Activated CD4-positive, alpha-beta T cell treated with anti-CD3 and anti-CD28 coated beads, Interleukin-2, amount 10 ng/mL, durations not matched to agents 24 days and 14 days (primary cell): ENCODE measurements at regions of chr13 and their contacts with region 1.

Region 1: DNA sequence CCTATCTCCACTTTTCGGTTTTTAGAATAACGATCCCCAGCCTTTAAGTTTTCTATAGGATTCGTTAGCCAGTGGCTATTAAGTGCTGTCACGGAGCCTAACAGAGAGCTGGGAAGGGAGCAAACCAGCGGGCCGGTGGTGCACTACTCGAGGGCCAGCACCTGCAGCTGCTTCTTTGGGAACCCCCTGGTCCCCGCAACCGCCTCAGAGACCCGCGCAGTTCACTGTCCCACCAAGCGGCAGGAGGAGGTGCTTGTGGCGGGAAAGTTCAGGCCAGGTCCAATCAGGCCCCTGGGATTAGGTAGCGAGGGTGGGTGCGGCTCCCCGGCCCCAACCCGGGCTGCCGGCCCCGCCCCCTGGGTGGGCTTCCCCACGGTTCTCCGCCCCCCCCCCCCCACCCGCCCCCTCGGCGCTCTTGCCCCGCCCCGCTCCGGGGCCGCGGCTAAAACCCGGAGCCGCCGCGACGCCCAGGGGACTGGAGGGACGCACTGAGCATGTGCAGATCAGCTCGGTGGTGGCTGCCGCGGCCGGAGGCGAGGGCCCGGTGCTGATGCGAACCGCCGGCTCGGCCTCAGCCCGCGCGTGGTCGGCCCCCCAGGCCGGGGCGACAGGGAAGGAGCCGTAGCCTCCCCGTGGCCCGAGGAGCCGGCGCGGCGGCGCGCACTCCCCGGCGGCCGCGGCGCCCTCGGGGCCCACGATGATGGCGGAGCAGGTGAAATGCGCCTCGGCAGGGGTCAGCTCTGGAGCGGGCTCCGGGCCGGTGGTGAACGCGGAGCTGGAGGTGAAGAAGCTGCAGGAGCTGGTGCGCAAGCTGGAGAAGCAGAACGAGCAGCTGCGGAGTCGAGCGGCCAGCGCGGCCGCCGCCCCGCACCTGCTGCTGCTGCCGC is at the start of gene SLAIN1:
- DNase-seq: peak; percentile 94
- H3K4me3 Mint-ChIP-seq: peak within 1 kb of the TSS; percentile 99
- H3K27ac Mint-ChIP-seq: peak within 1 kb of the TSS; percentile 68
- H3K4me1 Mint-ChIP-seq: peaks cover 31% of the 10 kb centered on the region
- H3K27me3 Mint-ChIP-seq: peaks cover 35% of the 10 kb centered on the region
- total RNA-seq, gene SLAIN1: 28.7 and 29.1 TPM in 2 replicates

Region 2: DNA sequence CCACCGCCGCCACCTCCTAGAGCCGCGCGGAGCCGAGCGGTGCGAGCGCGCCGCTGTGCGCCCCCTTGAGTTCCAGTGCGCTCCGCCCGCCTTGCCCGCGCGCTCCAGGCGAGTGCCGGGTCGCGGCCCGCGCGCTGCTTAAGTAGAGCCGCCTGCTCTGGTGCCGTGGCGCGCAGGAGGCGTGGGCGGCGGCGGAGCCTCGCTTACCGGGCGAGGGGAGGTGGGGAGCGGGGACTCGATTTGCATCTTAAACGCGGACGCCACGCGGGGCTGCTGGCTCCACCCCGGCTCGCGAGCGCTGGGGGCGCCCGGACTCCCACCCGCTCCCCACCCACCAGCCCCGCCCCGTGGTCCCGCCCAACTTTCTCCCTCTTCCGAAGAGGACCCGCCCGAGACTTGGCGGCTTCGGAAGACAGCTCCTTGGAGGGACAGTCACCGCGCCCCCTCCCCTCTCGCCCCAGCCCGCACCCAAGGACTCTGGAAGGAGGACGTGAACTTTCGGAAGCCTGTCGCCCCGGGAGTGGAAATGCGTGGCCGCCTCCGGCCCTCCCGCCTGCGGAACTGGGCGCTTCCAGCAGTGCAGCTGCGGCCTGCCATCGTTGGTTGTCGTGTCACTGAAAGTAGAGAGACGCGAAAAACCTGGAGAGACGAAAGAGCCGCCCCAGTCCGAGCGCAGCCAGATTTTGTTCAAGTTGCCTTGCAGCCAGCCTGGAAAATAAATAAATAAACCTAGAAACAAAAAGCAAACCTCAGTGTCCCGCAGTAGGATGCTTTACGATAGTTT is 811.0 kb before region 1 on chr13 and contains the start of gene KCTD12:
- intact Hi-C with region 1: loop called (anchors 5 kb)
- DNase-seq: peak; percentile 93
- H3K4me3 Mint-ChIP-seq: peak within 1 kb of the TSS; percentile 89
- H3K27ac Mint-ChIP-seq: peak within 1 kb of the TSS; percentile 87
- H3K4me1 Mint-ChIP-seq: peaks cover 26% of the 10 kb centered on the region
- H3K27me3 Mint-ChIP-seq: peaks cover 40% of the 10 kb centered on the region
- total RNA-seq, gene KCTD12: 11.8 and 12.9 TPM in 2 replicates

Region 3: GRCh38 chr13:77729502-77730221 is 32.2 kb after region 1 on chr13:
- intact Hi-C with region 1: loop called (anchors 1 kb)
- DNase-seq: peak; percentile 84
- H3K4me3 Mint-ChIP-seq: peak overlapping the region; percentile 61
- H3K27ac Mint-ChIP-seq: peak overlapping the region; percentile 78
- H3K4me1 Mint-ChIP-seq: peaks cover 24% of the 10 kb centered on the region
- H3K27me3 Mint-ChIP-seq: no peaks in the 10 kb centered on the region

Region 4: DNA sequence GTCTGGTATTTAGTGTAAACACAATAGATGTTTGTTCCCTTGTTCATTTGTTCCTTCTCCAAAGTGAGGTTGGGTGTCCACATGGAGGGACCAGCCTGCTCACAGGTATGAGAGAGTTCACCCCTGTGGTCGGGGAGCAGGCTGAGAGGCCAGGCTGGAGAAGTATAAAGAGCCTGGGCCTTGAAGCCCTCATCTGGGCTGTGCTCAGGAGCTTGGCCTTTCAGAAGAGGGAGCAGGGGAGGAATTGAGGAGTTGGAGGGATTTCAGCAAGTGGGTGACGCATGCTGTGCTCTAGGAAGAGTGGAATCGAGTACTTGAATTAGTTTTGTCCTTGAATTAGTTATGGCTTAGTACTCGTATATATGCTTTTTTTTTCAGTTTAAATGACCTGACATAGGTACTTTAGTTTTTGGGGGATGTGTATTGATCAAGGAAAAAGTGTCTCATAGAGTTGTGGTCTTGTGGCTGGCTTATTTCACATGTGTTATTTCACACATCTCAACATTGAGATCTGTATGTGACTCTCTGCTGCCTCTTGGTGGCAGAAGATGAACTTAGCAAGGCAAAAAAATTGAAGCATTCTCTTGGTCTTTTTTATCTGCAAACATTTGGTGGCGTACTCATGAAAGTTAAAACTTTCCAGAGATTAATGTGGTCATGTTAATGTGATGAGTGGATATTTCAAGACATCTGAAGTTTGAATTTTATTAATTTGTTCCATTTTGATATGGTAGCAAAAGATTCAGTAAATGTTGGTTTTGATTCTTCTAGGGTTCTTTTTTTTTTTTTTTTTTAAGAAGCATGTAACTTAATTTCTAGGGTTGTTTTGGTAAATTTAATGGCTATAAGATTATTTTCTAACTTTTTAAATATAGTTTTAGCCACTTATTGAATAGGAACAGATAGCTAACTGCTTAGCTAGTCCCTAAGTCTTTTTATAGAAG is 54.3 kb after region 1 on chr13:
- intact Hi-C with region 1: loop called (anchors 1 kb)
- DNase-seq: peak; percentile 87
- H3K4me3 Mint-ChIP-seq: no peak overlapping the region
- H3K27ac Mint-ChIP-seq: peak overlapping the region; percentile 69
- H3K4me1 Mint-ChIP-seq: peaks cover 14% of the 10 kb centered on the region
- H3K27me3 Mint-ChIP-seq: no peaks in the 10 kb centered on the region